A673 (cell line): ENCODE measurements at regions of chr1 and their contacts with region 1.

Region 1: DNA sequence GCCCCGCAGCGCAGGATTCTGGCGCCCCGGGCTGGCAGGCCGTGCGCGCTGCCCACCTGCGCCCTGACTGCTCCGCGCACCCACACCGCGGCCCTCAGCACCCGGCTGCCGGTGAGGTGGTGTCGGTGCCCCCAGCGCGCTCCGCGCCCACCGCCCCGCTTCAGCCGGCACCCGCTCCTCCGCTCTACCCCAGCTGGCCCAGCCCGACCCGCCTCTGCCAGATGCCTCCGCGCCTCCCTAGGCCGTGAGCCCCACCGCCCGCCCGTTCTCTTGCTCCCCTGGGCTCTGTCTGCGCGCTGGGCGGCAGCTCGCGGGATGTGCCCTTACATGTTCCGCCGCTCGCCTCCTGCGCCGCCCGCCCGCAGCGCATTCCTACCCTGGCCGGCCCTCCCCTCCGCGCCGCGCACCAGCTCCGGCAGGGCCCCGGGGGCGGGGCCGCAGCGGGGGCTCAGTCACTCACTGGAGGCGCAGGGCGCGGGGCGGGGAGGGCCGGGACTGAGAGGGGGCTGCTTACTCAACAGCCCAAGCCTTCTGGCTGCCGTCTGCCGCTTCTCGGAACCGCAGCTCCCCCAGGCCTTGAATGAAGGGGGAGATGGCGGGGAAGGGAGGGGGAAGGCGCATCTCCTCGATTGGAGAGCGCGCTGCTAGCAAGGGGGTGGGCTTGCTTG is at the start of gene PHLDA3:
- DNase-seq: peak; percentile 95
- H3K4me3 ChIP-seq: peak within 1 kb of the TSS; percentile 76
- H3K27ac ChIP-seq: peak within 1 kb of the TSS; percentile 93
- H3K4me1 ChIP-seq: peaks cover 21% of the 10 kb centered on the region
- H3K27me3 ChIP-seq: no peaks in the 10 kb centered on the region
- CTCF ChIP-seq: no peak
- total RNA-seq, gene PHLDA3: 23.9 and 24.1 TPM in 2 replicates

Region 2: DNA sequence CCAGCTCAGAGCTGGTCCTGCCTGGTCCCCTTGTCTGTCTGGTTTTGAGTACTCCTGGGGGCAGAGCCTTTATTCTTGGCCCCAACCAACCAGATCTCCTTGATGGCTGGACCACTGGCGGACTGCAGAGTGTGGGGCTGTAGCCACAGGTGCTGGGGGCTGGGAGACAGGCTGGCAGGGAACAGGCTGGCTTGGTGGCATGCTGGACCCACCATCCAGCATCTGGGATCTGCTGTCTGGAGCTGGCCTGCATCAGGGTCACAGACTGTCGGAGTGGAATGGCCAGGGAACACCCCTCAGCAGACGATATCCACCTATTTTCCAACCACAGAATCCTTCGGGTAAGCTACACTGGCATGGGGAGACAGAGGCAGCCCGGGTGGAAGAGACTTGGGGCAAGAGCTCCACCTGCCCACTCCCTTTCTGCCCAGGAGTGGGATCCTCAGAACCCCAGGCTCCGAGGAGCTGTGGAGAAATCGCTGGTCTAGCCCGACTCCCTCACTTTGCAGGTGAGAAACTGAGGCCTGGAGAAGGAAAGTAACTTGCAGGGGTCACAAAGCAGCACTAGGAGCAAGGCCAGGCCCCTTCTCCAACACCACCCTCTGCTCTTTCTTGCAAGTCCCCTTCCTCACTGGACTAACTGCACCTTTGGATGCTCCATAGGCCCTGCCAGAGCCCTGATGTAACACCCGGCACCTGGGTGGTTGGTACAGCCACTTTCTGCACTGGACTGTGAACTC is 132.1 kb before region 1 on chr1:
- CTCF ChIA-PET with region 1: no interaction called
- POLR2A ChIA-PET with region 1: interaction called, 29 read pairs
- intact Hi-C with region 1: no loop called
- DNase-seq: no peak
- H3K4me3 ChIP-seq: no peak overlapping the region
- H3K27ac ChIP-seq: no peak overlapping the region
- H3K4me1 ChIP-seq: peaks cover 32% of the 10 kb centered on the region
- H3K27me3 ChIP-seq: no peaks in the 10 kb centered on the region
- CTCF ChIP-seq: no peak

Region 3: DNA sequence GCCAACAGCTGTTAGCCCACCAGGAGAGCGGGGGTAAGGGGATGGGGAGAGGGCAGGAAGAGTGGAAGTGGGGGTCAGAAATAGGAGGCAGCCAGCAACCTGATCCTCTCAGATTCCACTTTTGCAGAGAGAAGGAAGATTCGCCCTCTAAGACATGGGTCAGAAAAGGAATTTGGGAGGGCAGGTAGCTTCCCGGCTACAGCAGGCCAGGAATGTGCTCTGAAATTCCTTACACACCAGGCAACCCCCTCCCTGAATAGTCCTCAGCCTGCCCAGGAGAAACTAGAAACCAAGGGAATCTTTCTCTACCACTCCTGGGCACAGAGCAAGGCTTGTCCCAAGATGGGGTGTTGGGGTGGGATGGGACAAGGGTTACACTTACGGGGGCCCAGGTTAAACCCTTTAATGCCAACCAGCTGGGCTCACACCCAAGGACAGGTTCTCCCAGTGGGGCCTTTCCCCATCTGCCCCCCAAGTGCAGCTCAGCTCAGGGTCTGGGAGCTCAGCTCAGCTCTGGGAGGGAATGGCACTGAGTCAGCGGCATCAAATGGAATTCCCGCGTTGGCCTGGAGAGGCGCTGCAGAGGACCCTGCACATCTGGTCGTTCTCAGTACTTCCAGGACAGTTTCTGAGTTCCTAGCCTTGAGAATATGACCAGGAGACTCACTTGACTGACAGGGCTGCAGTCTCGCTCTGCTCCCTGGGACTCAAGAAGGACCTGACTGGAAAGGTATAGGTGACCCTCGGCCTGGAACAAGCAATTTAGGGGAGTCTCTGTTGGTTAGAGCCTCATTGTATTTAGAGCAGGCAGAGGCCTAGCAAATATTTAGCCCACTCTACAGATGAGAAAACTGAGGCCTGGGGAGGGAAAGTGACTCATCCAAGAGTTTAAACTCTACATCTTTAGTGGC is 92.3 kb before region 1 on chr1:
- CTCF ChIA-PET with region 1: no interaction called
- POLR2A ChIA-PET with region 1: no interaction called
- intact Hi-C with region 1: no loop called
- DNase-seq: peak; percentile 33
- H3K4me3 ChIP-seq: no peak overlapping the region
- H3K27ac ChIP-seq: no peak overlapping the region
- H3K4me1 ChIP-seq: no peaks in the 10 kb centered on the region
- H3K27me3 ChIP-seq: no peaks in the 10 kb centered on the region
- CTCF ChIP-seq: peak; percentile 57

Region 4: DNA sequence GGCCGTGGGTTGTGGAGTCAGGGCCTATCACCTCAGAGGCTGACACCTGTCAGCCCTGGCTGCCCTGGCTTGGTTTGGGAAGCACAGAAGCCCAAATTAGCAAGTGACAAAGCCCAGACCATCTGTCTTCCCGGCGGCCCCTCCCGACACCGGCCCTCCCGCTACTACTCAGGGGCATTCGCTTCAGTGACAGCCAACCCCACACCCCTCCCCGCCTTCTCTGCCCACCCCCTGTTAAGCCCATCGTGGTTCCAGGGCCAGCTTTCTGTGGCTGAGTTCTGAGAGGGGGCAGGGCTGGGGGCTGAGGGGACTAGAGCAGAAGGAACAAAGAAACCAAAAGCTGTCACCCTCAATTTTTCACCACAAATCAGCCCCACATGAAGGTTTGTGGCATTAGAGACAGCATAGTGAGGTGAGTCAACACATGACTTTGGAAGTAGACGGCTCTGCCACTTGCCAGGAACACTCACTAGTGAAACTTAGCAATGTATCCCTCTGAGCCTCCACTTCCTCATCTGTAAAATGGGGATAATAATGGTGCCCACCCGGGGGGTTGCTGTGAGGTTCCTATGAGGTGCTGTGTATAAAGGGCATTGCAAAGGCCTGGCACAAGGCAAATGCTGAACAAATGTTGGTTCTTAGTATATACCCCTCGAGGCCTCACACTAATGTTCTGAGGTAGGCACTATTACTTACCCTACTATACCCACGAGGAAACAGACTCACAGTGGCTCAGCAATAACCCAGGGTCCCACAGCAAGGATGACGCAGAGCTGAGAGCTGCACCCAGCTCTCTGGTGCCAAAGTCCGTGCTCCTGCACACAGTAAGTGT is 42.3 kb before region 1 on chr1:
- CTCF ChIA-PET with region 1: no interaction called
- POLR2A ChIA-PET with region 1: no interaction called
- intact Hi-C with region 1: no loop called
- DNase-seq: no peak
- H3K4me3 ChIP-seq: no peak overlapping the region
- H3K27ac ChIP-seq: no peak overlapping the region
- H3K4me1 ChIP-seq: no peaks in the 10 kb centered on the region
- H3K27me3 ChIP-seq: no peaks in the 10 kb centered on the region
- CTCF ChIP-seq: no peak

Region 5: GRCh38 chr1:201447911-201448871 is 20.8 kb before region 1 on chr1:
- CTCF ChIA-PET with region 1: interaction called, 21 read pairs
- POLR2A ChIA-PET with region 1: no interaction called
- intact Hi-C with region 1: no loop called
- DNase-seq: peak; percentile 82
- H3K4me3 ChIP-seq: no peak overlapping the region
- H3K27ac ChIP-seq: no peak overlapping the region
- H3K4me1 ChIP-seq: peaks cover 31% of the 10 kb centered on the region
- H3K27me3 ChIP-seq: no peaks in the 10 kb centered on the region
- CTCF ChIP-seq: peak; percentile 87

Region 6: DNA sequence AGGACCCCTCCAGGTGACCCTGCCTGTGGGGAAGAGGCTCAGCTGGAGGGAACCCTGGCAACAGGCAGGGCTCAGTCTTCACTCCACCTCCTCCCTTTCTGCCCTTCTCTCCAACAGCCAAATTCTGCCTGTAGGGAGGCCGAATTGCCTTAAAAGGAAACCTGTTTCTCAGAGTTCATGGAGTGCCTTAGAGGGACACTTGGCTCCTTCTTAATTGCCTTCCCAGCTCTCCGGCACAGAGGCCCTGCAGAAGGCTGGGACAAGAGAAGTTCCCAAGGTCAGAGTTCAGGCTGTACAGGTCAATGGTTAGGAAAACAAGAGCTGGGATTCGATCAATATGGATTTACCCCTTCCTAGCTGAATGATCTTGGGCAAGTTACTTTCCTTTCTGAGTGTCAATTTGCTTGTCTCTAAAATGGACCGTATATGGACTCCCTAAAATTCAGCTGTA is 31.7 kb after region 1 on chr1:
- CTCF ChIA-PET with region 1: no interaction called
- POLR2A ChIA-PET with region 1: no interaction called
- intact Hi-C with region 1: loop called (anchors 1 kb)
- DNase-seq: no peak
- H3K4me3 ChIP-seq: no peak overlapping the region
- H3K27ac ChIP-seq: peak overlapping the region; percentile 61
- H3K4me1 ChIP-seq: peaks cover 56% of the 10 kb centered on the region
- H3K27me3 ChIP-seq: no peaks in the 10 kb centered on the region
- CTCF ChIP-seq: no peak

Region 7: DNA sequence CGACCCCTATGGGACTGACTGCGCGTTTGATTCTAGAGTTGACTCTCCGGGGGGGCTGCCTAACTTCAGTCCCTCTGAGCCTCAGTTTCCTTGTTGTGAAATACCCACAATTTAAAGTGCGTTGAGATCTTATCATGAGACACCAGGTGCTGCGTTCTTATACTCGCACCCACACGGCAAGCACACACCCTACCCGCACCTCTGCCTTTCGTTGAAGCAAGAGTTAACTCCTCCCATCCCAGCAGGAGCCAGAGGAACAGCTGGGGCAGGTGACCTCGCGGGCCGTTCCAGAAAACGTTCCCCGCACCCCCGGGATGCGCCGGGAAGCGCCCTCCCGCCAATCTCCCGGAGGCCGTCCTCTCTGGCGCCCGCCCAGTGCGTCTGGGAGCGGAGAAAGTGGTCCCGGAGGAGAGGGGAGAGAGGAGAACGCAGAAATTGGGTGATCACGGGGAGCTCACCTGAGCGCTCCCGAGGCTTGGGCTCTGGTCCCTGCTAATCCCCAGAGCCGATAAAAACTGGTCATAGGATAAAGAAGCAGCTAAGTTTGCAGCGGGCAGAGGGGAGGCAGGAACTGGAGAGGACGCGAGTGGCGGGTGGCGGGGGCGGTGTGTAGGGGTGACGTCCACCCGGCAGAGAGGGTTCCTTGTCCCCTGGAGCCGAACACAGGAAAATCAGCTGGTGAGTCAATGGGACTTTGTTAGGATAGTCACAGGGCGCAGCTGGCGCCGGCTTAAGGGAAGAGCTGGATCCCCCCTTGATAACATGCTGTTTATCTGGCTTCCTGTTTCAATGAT is 70.8 kb after region 1 on chr1:
- CTCF ChIA-PET with region 1: no interaction called
- POLR2A ChIA-PET with region 1: interaction called, 10 read pairs
- intact Hi-C with region 1: no loop called
- DNase-seq: peak; percentile 91
- H3K4me3 ChIP-seq: peak overlapping the region; percentile 67
- H3K27ac ChIP-seq: peak overlapping the region; percentile 88
- H3K4me1 ChIP-seq: peaks cover 60% of the 10 kb centered on the region
- H3K27me3 ChIP-seq: no peaks in the 10 kb centered on the region
- CTCF ChIP-seq: no peak

Region 8: DNA sequence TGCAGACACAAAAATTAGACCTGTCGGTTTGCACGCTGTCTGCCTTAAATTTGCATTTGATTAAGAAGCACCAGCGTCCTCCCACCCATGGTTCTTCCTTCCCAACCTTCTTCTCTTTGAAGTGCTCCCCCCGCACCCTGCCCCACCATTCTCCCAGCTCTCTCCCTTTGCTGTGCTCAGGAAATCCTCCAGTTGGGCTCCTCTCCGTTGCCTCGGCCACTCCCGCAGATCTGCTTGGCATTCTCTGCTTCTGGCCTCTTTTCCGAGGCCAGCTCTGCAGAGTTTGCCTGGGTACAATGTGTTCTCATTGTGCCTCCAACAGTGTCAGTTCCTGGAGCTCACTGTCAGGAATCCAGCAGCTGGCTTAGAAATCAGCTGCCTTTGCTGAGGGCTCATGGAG is 196.1 kb after region 1 on chr1:
- CTCF ChIA-PET with region 1: no interaction called
- POLR2A ChIA-PET with region 1: no interaction called
- intact Hi-C with region 1: no loop called
- DNase-seq: no peak
- H3K4me3 ChIP-seq: no peak overlapping the region
- H3K27ac ChIP-seq: no peak overlapping the region
- H3K4me1 ChIP-seq: no peaks in the 10 kb centered on the region
- H3K27me3 ChIP-seq: no peaks in the 10 kb centered on the region
- CTCF ChIP-seq: no peak